ENCODE measurements at regions of chr14 and their contacts with region 1.

Region 1: DNA sequence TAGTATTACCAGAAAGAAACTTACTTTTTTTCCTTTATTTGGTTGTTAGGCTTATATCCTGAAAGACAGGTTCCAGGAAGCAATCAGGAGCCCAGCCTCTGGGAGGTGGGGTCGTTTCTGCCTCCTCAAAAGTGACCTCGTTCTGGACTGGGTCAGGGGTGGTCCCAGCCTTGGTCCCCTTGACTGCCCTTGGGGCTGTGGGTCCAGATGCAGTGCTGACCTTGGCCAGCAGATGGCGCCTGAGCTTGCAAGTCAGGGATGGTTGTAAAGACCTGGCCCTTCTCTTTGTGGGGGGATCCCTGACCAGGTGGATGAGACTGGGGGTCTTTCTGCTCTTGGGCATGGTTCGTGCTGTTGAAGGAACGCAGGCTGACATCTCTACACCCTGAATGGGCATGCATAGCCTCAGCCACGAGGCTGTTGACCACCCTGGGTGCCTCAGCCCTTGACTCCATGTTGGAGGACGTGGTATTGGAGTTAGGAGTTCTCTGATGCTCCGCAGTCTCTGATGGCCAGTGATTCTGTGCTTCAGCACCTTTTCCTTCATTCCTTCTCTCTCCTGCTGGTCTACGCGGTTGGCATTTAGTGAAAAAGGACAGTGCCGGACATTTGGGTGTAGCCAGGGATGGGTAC is 62.4 kb downstream of the ADCK1 start:
- DNase-seq: peak; percentile 70 to 87 (median 81)
- H3K4me3 ChIP-seq: no peak overlapping the region
- H3K27ac ChIP-seq: no peak overlapping the region
- H3K4me1 ChIP-seq: no peaks in the 10 kb centered on the region
- H3K27me3 ChIP-seq: no peaks in the 10 kb centered on the region
- CTCF ChIP-seq: peak; percentile 93

Region 2: DNA sequence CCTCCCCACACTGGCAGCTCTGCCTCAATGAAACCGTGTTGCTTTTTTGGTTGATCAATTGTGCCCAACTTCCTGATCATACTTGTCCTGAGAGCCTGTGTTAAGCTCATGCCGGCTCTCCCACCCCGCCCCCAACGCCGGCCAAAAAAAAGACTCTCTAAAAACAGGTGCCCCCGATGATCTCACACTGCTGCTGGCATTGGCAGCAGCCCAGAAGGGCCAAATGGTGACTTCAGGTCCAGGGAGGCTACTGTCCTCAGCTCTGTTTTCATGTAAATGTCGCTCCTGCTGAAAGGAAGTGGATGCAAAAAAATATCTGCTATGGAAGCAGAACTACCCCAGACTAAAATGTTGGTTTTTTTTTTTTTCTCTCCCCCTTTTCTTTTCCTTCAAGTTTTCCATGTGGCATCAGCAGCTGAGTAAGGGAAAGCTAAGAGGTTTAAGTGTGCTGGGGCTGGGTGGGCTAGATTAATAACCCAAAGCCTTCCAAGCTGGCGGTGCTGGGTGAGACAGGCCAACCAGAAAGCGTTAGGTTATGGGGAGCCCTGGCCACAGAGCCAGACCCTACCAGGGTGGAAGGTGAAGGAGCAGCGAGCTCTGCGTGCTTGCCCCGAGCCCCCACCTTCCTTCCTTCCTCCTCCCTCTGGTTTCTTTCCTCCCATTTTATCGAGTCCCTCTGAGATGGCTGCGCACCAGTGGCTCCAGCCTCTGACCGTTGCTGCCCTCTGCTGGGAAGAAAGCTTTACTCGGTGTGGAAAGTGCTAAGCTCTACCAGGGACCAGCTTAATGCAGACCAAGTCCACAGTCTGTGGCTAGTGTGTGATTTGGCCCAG is 704.0 kb after region 1 on chr14:
- intact Hi-C with region 1: loop called (anchors 10 kb)
- DNase-seq: peak; percentile 81 to 92 (median 86)
- H3K4me3 ChIP-seq: peak overlapping the region; percentile 32 to 73 (median 63)
- H3K27ac ChIP-seq: no peak overlapping the region
- H3K4me1 ChIP-seq: no peaks in the 10 kb centered on the region
- H3K27me3 ChIP-seq: no peaks in the 10 kb centered on the region
- CTCF ChIP-seq: peak; percentile 79